SK-N-SH (cell line): ENCODE measurements at regions of chr4 and their contacts with region 1.

Region 1: DNA sequence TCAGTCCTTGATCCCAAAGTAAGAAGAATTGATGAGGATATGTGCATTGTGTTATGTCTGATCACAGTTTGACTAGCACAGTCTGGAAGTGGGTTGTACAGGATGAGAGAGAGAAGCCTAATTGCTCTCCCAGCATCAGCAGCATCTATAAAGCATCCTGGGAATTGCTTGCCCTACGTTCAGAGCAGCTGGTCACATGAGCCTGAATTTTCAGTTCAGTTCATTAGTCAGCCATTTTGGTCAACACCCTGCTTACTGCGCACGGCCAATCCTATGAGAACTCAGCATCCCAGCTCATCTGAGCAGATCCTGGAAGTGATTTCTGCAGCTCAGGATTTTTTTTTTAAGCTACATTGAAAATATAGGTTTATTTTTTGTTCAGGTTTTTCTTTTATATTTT is at the start of gene RUFY3:
- DNase-seq: peak; percentile 80
- H3K4me3 ChIP-seq: peak within 1 kb of the TSS; percentile 59 to 80
- H3K27ac ChIP-seq: peak within 1 kb of the TSS; percentile 93
- H3K4me1 ChIP-seq: peaks cover 0 to 14% of the 10 kb centered on the region in 2 experiments; a peak in 2 of 4 replicates
- H3K27me3 ChIP-seq: no peaks in the 10 kb centered on the region
- CTCF ChIP-seq: no peak
- EP300 ChIP-seq: peak in 1 of 2 experiments; percentile 57; a peak in 1 of 4 replicates
- RAD21 ChIP-seq: no peak
- polyA plus RNA-seq, gene RUFY3: 22.8 and 30.7 TPM in 2 replicates

Region 2: DNA sequence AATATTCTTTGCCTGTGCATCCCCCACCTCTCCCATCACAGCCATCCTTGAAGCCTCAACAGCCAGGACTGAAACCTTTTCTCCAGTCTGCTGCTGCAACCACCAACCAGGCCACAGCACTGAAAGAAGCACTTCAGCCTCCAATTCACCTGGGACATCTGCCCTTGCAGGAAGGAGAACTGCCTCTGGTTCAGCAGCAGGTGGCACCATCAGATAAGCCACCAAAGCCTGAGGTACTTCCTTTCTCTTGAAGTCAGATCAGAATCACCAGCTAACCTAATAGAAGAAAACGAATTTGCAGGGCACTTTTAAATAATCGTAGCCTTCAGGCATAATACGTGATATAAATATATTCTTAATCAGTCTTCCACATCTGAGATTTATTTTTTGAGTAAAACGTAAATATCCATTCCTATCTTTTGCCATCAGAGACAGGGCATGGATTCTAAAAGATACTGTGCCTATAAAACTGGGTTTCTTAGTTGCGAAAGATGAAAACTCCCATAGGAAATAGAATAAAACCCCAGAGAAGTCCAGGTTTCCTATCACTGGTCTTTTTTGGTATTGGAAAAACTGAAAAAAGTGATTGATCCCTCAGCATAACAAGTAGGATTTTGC is 120.2 kb before region 1 on chr4:
- CTCF ChIA-PET with region 1: no interaction called
- POLR2A ChIA-PET with region 1: no interaction called
- DNase-seq: peak; percentile 13
- H3K4me3 ChIP-seq: no peak overlapping the region
- H3K27ac ChIP-seq: no peak overlapping the region
- H3K4me1 ChIP-seq: no peaks in the 10 kb centered on the region
- H3K27me3 ChIP-seq: peaks cover 3% of the 10 kb centered on the region; the same call in 1 of the 2 replicates
- CTCF ChIP-seq: peak; percentile 75
- EP300 ChIP-seq: no peak
- RAD21 ChIP-seq: peak; percentile 78

Region 3: GRCh38 chr4:70687821-70688794 is 33.6 kb before region 1 on chr4 and contains the start of gene UTP3:
- CTCF ChIA-PET with region 1: interaction called, 3 read pairs
- POLR2A ChIA-PET with region 1: interaction called, 14 read pairs
- DNase-seq: peak; percentile 87
- H3K4me3 ChIP-seq: peak within 1 kb of the TSS; percentile 90 to 98
- H3K27ac ChIP-seq: peak within 1 kb of the TSS; percentile 93 to 94
- H3K4me1 ChIP-seq: peaks cover 6 to 13% of the 10 kb centered on the region in 2 experiments; a peak in 3 of 4 replicates
- H3K27me3 ChIP-seq: no peaks in the 10 kb centered on the region; the same call in 1 of the 2 replicates
- CTCF ChIP-seq: peak; percentile 97
- EP300 ChIP-seq: peak in 1 of 2 experiments; percentile 75; a peak in 2 of 4 replicates
- RAD21 ChIP-seq: peak; percentile 63
- polyA plus RNA-seq, gene UTP3: 36.9 and 39.0 TPM in 2 replicates

Region 4: DNA sequence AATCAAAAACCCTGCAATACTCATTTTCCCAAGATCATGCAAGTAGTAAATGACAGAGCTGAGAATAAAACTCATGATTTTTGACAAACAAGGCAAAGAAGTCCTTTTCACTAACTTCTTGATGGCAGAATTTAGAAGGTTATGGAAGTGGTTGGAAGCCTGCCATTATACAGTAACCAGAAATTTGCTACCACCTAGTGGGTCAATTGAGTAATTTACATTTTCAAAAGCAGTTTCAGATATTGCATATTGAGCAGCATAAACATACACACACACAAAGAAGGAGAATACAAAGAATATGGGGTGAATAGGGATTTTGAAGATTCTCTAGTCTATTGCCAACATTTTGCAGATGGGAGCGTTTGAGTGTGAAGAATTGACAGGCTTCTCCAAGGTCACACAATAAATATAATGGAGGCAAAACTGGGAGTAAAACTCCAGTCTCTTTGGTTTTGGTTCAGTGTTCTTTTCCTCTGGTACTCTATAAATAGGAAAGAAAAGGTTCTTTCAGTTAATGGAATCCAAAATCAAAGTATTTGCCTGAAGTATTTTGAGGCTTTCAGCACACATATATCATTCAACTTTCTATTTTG is 992.0 kb after region 1 on chr4:
- CTCF ChIA-PET with region 1: no interaction called
- POLR2A ChIA-PET with region 1: no interaction called
- DNase-seq: peak; percentile 4
- H3K4me3 ChIP-seq: no peak overlapping the region
- H3K27ac ChIP-seq: no peak overlapping the region
- H3K4me1 ChIP-seq: no peaks in the 10 kb centered on the region
- H3K27me3 ChIP-seq: no peaks in the 10 kb centered on the region
- CTCF ChIP-seq: peak; percentile 71
- EP300 ChIP-seq: no peak
- RAD21 ChIP-seq: peak; percentile 77